ENCODE measurements at regions of chr11 and their contacts with region 1.

Region 1: DNA sequence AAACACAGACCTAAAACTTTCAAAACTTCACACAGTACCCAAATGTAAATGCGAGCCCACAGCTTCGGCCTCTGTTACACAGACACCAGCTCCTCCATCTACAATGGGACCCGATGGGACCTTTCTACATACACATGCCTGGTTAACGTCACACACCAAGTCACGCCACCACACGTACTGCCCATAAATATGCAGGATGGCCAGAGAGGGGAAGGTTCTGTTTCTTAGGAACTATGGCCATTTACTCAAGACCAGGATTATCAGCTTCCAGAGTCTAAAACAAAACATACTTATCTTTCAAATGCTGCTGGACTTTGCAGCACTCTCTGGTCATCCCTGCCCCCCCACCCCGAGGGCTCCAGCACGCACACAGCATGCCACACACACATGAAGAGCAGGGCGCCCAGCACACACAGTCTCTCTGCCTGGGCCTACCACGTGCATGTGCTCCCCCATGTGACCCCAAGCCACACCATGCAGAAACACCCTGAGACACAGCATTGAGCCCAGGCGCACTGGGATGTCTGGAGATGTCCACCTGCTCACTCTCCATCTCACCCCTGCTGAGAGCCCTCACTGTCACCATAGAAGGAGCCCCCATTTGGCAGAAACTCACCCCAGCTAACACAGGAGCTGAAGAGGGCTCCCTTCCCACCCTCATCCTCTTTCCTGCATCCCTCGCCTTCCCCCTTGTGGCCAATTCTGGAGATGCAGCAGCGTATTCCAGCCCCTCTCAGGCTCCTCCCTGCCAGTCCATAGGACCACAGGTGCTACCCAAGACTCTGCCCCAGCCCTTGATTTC is 61.8 kb downstream of the SLC22A12 start:
- DNase-seq: peak; percentile 71
- H3K4me3 ChIP-seq: no peak overlapping the region
- H3K27ac ChIP-seq: no peak overlapping the region
- H3K4me1 ChIP-seq: no peaks in the 10 kb centered on the region
- H3K27me3 ChIP-seq: peaks cover 0 to 2% of the 10 kb centered on the region in 2 experiments
- CTCF ChIP-seq: peak; percentile 85 to 89
- POLR2A ChIP-seq: no peak

Region 2: DNA sequence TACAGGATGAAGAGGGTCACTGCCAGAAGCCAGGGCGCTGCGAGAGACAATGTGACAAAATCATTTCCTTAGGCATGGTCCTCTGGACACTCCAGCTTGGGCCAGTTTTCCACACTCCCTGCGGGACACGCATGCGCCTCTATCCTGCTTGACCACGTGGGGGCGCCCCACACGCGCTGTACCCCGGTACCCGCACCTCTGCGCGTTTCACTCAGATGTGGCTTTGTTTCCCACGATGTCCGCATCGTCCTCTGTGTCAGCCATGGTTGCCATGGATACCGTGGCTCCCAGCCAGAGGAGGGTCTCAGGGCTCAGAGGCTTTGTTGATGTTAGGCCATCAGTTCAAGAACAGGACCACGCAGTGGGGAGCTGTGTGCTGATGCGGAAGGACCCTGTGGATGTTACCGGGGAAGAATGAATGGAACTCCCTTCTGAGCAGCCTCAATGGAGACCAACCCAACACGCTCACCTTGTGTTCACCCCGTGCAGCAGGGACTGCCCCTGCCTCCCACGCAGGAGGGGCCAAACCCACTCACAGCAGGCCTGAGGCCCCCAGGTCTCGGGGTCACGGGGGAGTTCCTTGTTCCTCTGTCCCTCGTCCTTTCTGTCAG is 162.9 kb before region 1 on chr11:
- CTCF ChIA-PET with region 1: interaction called, 136 read pairs
- POLR2A ChIA-PET with region 1: no interaction called
- dilution Hi-C with region 1: no loop called
- intact Hi-C with region 1: loop called (anchors 1 kb)
- DNase-seq: peak; percentile 29
- H3K4me3 ChIP-seq: no peak overlapping the region
- H3K27ac ChIP-seq: no peak overlapping the region
- H3K4me1 ChIP-seq: no peaks in the 10 kb centered on the region
- H3K27me3 ChIP-seq: peaks cover 4 to 12% of the 10 kb centered on the region in 2 experiments
- CTCF ChIP-seq: peak; percentile 77 to 85
- POLR2A ChIP-seq: no peak

Region 3: DNA sequence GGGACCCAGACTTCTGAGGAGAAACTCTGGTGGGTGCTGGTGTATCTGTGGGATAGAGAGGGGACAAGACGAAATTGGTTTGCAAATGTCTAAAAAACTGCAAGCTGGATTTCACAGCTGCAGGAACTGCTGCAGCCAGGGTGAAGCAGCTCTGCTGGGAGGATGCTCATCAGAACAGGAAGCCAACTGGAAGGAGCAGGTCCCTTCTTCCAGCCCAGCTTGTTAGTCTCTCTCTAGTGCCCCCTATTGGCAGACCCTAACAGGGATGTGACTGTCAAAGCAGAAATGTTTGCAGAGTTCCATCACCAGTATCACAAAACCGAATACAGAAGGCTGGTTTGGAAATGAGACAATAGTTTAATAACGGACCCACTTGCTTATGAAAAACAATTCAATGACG is 136.6 kb before region 1 on chr11:
- CTCF ChIA-PET with region 1: interaction called, 9 read pairs
- POLR2A ChIA-PET with region 1: no interaction called
- dilution Hi-C with region 1: loop called (anchors 25 kb)
- intact Hi-C with region 1: no loop called
- DNase-seq: no peak
- H3K4me3 ChIP-seq: no peak overlapping the region
- H3K27ac ChIP-seq: no peak overlapping the region
- H3K4me1 ChIP-seq: no peaks in the 10 kb centered on the region
- H3K27me3 ChIP-seq: peaks cover 4 to 15% of the 10 kb centered on the region in 2 experiments
- CTCF ChIP-seq: peak in 1 of 2 donors; percentile 11
- POLR2A ChIP-seq: no peak

Region 4: GRCh38 chr11:64553551-64554201 is 99.1 kb before region 1 on chr11:
- CTCF ChIA-PET with region 1: interaction called, 8 read pairs
- POLR2A ChIA-PET with region 1: no interaction called
- dilution Hi-C with region 1: no loop called
- intact Hi-C with region 1: loop called (anchors 1 kb)
- DNase-seq: peak; percentile 54
- H3K4me3 ChIP-seq: no peak overlapping the region
- H3K27ac ChIP-seq: no peak overlapping the region
- H3K4me1 ChIP-seq: peaks cover 10% of the 10 kb centered on the region
- H3K27me3 ChIP-seq: no peaks in the 10 kb centered on the region
- CTCF ChIP-seq: peak; percentile 96 to 97
- POLR2A ChIP-seq: no peak

Region 5: GRCh38 chr11:64969209-64969608 is 316.4 kb after region 1 on chr11:
- CTCF ChIA-PET with region 1: no interaction called
- POLR2A ChIA-PET with region 1: no interaction called
- dilution Hi-C with region 1: no loop called
- intact Hi-C with region 1: no loop called
- DNase-seq: peak; percentile 31
- H3K4me3 ChIP-seq: no peak overlapping the region
- H3K27ac ChIP-seq: no peak overlapping the region
- H3K4me1 ChIP-seq: peaks cover 15% of the 10 kb centered on the region
- H3K27me3 ChIP-seq: no peaks in the 10 kb centered on the region
- CTCF ChIP-seq: no peak
- POLR2A ChIP-seq: no peak

Measured in endothelial cell of umbilical vein (primary cell).